ENCODE measurements at regions of chr3 and their contacts with region 1.

Region 1: GRCh38 chr3:179929091-179929529 is 107.6 kb downstream of the PEX5L start:
- DNase-seq: no peak
- ATAC-seq: peak; percentile 84
- H3K4me3 ChIP-seq: no peak overlapping the region
- H3K27ac ChIP-seq: no peak overlapping the region
- H3K4me1 ChIP-seq: no peaks in the 10 kb centered on the region; the same call in 1 of the 2 replicates
- H3K27me3 ChIP-seq: no peaks in the 10 kb centered on the region
- CTCF ChIP-seq: peak; percentile 70 to 79 (median 72)
- EP300 ChIP-seq: no peak
- POLR2A ChIP-seq: no peak
- RAD21 ChIP-seq: peak; percentile 92

Region 2: DNA sequence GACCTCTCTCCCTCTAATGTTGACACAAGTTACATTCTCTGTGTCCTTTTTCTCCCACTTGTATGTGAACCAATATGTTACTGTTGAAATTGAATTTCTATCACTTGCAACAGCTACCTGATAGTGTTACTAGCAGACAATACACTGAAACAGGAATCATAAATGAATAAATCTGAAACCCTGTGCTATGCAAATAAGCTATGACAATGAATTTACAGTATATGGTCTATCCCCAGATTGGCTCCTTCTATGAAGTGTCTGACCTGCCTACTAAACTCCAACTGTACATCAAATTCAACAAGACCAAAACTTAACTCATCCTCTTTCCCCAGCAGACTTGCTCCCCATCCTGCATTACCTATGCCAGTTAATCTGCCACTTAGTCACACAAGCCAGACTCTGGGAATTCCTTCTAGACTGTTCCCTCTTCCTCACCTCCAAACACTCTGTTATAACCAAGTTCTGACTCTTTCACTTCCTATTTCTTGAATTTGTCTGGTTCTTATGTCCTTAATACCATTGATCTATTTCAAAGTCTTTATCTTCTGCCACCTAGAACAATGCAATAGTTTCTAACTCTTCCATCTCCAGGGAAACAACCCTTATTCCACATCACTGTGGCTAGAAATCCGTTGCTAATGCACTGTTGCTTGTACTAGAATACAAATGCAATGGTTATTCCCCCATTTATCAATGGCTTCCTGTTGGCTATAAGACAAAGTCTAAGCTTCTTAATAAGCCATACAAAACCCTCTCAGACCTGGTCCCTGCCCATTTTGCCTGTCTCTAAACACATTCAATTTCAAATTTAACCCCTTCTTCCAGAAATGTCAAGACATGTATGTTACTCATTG is 619.7 kb before region 1 on chr3:
- CTCF ChIA-PET with region 1: no interaction called
- POLR2A ChIA-PET with region 1: no interaction called
- RAD21 ChIA-PET with region 1: no interaction called
- SMC1A ChIA-PET with region 1: no interaction called
- in situ Hi-C with region 1: no loop called
- intact Hi-C with region 1: no loop called
- DNase-seq: no peak
- ATAC-seq: peak; percentile 95
- H3K4me3 ChIP-seq: no peak overlapping the region
- H3K27ac ChIP-seq: no peak overlapping the region
- H3K4me1 ChIP-seq: peaks cover 4% of the 10 kb centered on the region
- H3K27me3 ChIP-seq: no peaks in the 10 kb centered on the region
- CTCF ChIP-seq: no peak
- EP300 ChIP-seq: no peak
- POLR2A ChIP-seq: no peak
- RAD21 ChIP-seq: no peak

Region 3: DNA sequence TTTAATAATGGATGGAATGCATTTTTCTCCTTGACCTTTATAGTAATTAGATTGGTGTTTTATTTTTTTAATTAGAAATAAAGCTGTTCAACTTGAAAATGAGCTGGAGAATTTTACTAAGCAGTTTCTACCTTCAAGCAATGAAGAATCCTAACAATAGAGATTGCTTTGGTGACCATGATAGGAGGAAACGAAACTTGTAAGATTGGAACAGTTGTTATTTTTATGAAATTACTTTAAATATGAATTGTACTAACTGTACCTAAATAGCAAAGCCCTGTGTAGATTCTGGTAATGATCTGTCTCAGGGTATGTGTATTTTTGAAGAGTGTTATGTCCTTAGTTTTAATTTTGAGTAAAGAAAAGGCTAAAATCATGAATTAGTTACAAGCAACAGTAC is 537.2 kb before region 1 on chr3:
- CTCF ChIA-PET with region 1: no interaction called
- POLR2A ChIA-PET with region 1: no interaction called
- RAD21 ChIA-PET with region 1: no interaction called
- SMC1A ChIA-PET with region 1: no interaction called
- in situ Hi-C with region 1: no loop called
- intact Hi-C with region 1: no loop called
- DNase-seq: no peak
- ATAC-seq: peak; percentile 51
- H3K4me3 ChIP-seq: no peak overlapping the region
- H3K27ac ChIP-seq: 0 out of 2 replicates have a peak overlapping the region, but pooled peaks have one; percentile 10
- H3K4me1 ChIP-seq: peaks cover 5% of the 10 kb centered on the region
- H3K27me3 ChIP-seq: no peaks in the 10 kb centered on the region
- CTCF ChIP-seq: no peak
- EP300 ChIP-seq: no peak
- POLR2A ChIP-seq: no peak
- RAD21 ChIP-seq: no peak

Region 4: DNA sequence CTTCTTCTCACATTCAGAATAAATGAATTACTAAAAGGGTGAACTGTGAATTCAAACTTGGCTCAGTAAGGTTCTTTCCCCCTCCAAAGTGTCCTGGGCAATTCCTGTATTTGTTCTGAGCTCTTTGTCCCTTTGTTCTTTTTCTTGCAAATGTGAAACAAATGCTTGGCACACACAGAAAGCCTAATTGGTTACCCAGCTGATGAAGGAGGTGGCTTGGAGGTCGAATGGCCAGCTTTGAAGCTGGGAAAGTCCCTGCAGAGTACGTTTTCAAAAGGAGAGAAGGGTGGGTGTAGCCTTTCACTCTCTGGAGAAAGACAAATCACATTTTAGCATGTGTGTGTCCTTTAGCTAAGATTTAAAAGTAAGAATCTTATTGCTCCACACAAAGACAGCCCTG is 46.8 kb before region 1 on chr3:
- CTCF ChIA-PET with region 1: interaction called, 57 read pairs
- POLR2A ChIA-PET with region 1: no interaction called
- RAD21 ChIA-PET with region 1: interaction called, 45 read pairs
- SMC1A ChIA-PET with region 1: interaction called, 64 read pairs
- in situ Hi-C with region 1: no loop called
- intact Hi-C with region 1: no loop called
- DNase-seq: peak; percentile 61
- ATAC-seq: peak; percentile 94
- H3K4me3 ChIP-seq: no peak overlapping the region
- H3K27ac ChIP-seq: peak overlapping the region; percentile 58; the same call in 1 of the 2 replicates
- H3K4me1 ChIP-seq: peaks cover 21% of the 10 kb centered on the region
- H3K27me3 ChIP-seq: no peaks in the 10 kb centered on the region
- CTCF ChIP-seq: no peak
- EP300 ChIP-seq: no peak
- POLR2A ChIP-seq: no peak
- RAD21 ChIP-seq: no peak

Region 5: GRCh38 chr3:179949412-179949811 is 20.3 kb after region 1 on chr3:
- CTCF ChIA-PET with region 1: interaction called, 34 read pairs
- POLR2A ChIA-PET with region 1: interaction called, 5 read pairs
- RAD21 ChIA-PET with region 1: interaction called, 10 read pairs
- SMC1A ChIA-PET with region 1: interaction called, 18 read pairs
- in situ Hi-C with region 1: no loop called
- intact Hi-C with region 1: no loop called
- DNase-seq: no peak
- ATAC-seq: peak; percentile 61
- H3K4me3 ChIP-seq: no peak overlapping the region
- H3K27ac ChIP-seq: no peak overlapping the region
- H3K4me1 ChIP-seq: no peaks in the 10 kb centered on the region
- H3K27me3 ChIP-seq: no peaks in the 10 kb centered on the region
- CTCF ChIP-seq: no peak
- EP300 ChIP-seq: no peak
- POLR2A ChIP-seq: no peak
- RAD21 ChIP-seq: no peak

Region 6: DNA sequence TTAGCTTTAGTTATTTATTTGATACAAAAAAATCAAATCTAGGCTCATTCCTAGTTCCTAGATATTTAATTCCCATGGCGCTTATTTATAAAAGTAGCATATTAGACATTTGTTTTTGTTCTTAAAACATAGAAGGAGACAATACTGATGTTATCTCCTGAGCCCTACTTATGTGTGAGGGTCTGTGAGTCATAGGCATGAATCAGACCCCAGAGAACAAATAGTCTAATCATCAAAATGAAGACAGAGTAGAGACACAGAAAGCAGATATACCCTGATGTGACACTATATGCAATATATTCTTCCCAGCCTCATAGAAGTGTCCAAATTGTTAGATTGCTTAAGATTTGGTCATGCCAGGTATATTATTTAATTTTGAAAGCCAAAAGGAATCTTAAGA is 62.8 kb after region 1 on chr3:
- CTCF ChIA-PET with region 1: interaction called, 13 read pairs
- POLR2A ChIA-PET with region 1: no interaction called
- RAD21 ChIA-PET with region 1: interaction called, 3 read pairs
- SMC1A ChIA-PET with region 1: interaction called, 12 read pairs
- in situ Hi-C with region 1: no loop called
- intact Hi-C with region 1: no loop called
- DNase-seq: no peak
- ATAC-seq: no peak
- H3K4me3 ChIP-seq: no peak overlapping the region
- H3K27ac ChIP-seq: no peak overlapping the region
- H3K4me1 ChIP-seq: no peaks in the 10 kb centered on the region
- H3K27me3 ChIP-seq: no peaks in the 10 kb centered on the region
- CTCF ChIP-seq: no peak
- EP300 ChIP-seq: no peak
- POLR2A ChIP-seq: no peak
- RAD21 ChIP-seq: no peak

Region 7: GRCh38 chr3:180059356-180059755 is 130.2 kb after region 1 on chr3:
- CTCF ChIA-PET with region 1: interaction called, 11 read pairs
- POLR2A ChIA-PET with region 1: no interaction called
- RAD21 ChIA-PET with region 1: no interaction called
- SMC1A ChIA-PET with region 1: interaction called, 7 read pairs
- in situ Hi-C with region 1: no loop called
- intact Hi-C with region 1: no loop called
- DNase-seq: no peak
- ATAC-seq: no peak
- H3K4me3 ChIP-seq: no peak overlapping the region
- H3K27ac ChIP-seq: no peak overlapping the region
- H3K4me1 ChIP-seq: no peaks in the 10 kb centered on the region
- H3K27me3 ChIP-seq: no peaks in the 10 kb centered on the region
- CTCF ChIP-seq: no peak
- EP300 ChIP-seq: no peak
- POLR2A ChIP-seq: no peak
- RAD21 ChIP-seq: no peak

Region 8: GRCh38 chr3:180188512-180189309 is 259.6 kb after region 1 on chr3:
- CTCF ChIA-PET with region 1: no interaction called
- POLR2A ChIA-PET with region 1: no interaction called
- RAD21 ChIA-PET with region 1: no interaction called
- SMC1A ChIA-PET with region 1: no interaction called
- in situ Hi-C with region 1: no loop called
- intact Hi-C with region 1: no loop called
- DNase-seq: no peak
- ATAC-seq: peak; percentile 80
- H3K4me3 ChIP-seq: no peak overlapping the region
- H3K27ac ChIP-seq: no peak overlapping the region
- H3K4me1 ChIP-seq: no peaks in the 10 kb centered on the region
- H3K27me3 ChIP-seq: no peaks in the 10 kb centered on the region
- CTCF ChIP-seq: no peak
- EP300 ChIP-seq: no peak
- POLR2A ChIP-seq: no peak
- RAD21 ChIP-seq: no peak

Region 9: GRCh38 chr3:180594631-180595558 is 665.8 kb after region 1 on chr3:
- CTCF ChIA-PET with region 1: interaction called, 18 read pairs
- POLR2A ChIA-PET with region 1: no interaction called
- RAD21 ChIA-PET with region 1: interaction called, 30 read pairs
- SMC1A ChIA-PET with region 1: interaction called, 14 read pairs
- in situ Hi-C with region 1: loop called (anchors 5 kb)
- intact Hi-C with region 1: loop called (anchors 1 kb)
- DNase-seq: peak; percentile 26
- ATAC-seq: peak; percentile 88
- H3K4me3 ChIP-seq: no peak overlapping the region
- H3K27ac ChIP-seq: no peak overlapping the region
- H3K4me1 ChIP-seq: no peaks in the 10 kb centered on the region
- H3K27me3 ChIP-seq: no peaks in the 10 kb centered on the region
- CTCF ChIP-seq: peak; percentile 38 to 72 (median 52); a peak in 5 of 6 replicates
- EP300 ChIP-seq: no peak
- POLR2A ChIP-seq: no peak
- RAD21 ChIP-seq: peak; percentile 91